Naive thymus-derived CD4-positive, alpha-beta T cell (primary cell): ENCODE measurements at regions of chr18 and their contacts with region 1.

Region 1: GRCh38 chr18:46281185-46282176 is 177.3 kb downstream of the HAUS1 start:
- DNase-seq: peak in 8 of 9 donors; percentile 7 to 60 (median 40)
- ATAC-seq: peak; percentile 85
- H3K4me3 ChIP-seq: no peak overlapping the region
- H3K4me3 Mint-ChIP-seq: no peak overlapping the region
- H3K27ac ChIP-seq: no peak overlapping the region
- H3K27ac Mint-ChIP-seq: no peak overlapping the region
- H3K4me1 ChIP-seq: no peaks in the 10 kb centered on the region
- H3K4me1 Mint-ChIP-seq: peaks cover 6 to 16% (median 14%) of the 10 kb centered on the region in 7 donors
- H3K27me3 ChIP-seq: no peaks in the 10 kb centered on the region
- H3K27me3 Mint-ChIP-seq: no peaks in the 10 kb centered on the region

Region 2: DNA sequence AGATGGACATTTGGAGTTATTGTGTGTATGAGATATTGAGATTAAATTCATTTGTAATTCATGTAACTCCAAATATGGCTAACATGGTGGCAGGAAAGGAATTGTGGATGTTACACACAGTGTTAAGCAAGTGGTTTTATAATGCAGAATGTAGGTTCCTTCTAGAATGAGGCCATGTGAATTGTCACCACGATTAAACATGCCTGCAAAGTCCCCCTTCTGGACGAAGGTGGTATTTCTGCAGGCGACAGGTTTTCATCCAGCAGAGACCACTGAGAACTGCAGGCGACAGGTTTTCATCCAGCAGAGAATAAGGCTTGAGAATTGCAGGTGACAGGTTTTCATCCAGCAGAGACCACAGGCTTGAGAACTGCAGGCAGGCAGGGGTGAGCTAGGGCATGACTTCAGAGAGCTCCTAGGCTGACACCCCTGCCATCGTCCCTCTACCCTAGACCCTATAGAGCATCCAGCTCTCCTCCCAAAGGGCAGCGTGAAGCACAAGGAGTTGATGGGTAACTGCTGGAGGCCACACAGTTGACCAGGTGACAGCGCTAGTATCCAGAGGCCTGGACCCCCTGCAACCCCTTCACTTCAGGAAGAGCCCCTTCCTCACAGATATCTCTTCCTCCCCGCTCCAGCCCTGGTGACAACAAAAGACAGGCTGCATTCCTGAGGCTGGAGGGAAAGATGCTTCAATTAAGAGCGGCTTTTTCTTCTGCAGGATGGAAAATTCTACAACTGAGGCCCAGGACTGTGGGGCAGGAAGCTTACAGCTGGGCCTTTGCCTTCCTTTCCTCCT is 199.8 kb after region 1 on chr18:
- CTCF ChIA-PET with region 1: no interaction called
- POLR2A ChIA-PET with region 1: no interaction called
- intact Hi-C with region 1: loop called (anchors 1 kb)
- DNase-seq: peak in 6 of 9 donors; percentile 31 to 60 (median 40)
- ATAC-seq: peak; percentile 67
- H3K4me3 ChIP-seq: no peak overlapping the region
- H3K4me3 Mint-ChIP-seq: no peak overlapping the region
- H3K27ac ChIP-seq: no peak overlapping the region
- H3K27ac Mint-ChIP-seq: no peak overlapping the region
- H3K4me1 ChIP-seq: no peaks in the 10 kb centered on the region
- H3K4me1 Mint-ChIP-seq: no peaks in the 10 kb centered on the region
- H3K27me3 ChIP-seq: no peaks in the 10 kb centered on the region
- H3K27me3 Mint-ChIP-seq: peaks cover 0 to 22% (median 10%) of the 10 kb centered on the region in 5 donors

Region 3: GRCh38 chr18:46502444-46502843 is 221.0 kb after region 1 on chr18:
- CTCF ChIA-PET with region 1: no interaction called
- POLR2A ChIA-PET with region 1: no interaction called
- intact Hi-C with region 1: no loop called
- DNase-seq: no peak
- ATAC-seq: no peak
- H3K4me3 ChIP-seq: no peak overlapping the region
- H3K4me3 Mint-ChIP-seq: no peak overlapping the region
- H3K27ac ChIP-seq: no peak overlapping the region
- H3K27ac Mint-ChIP-seq: no peak overlapping the region
- H3K4me1 ChIP-seq: no peaks in the 10 kb centered on the region
- H3K4me1 Mint-ChIP-seq: peaks cover 0 to 2% (median 0%) of the 10 kb centered on the region in 7 donors
- H3K27me3 ChIP-seq: no peaks in the 10 kb centered on the region
- H3K27me3 Mint-ChIP-seq: peaks cover 0 to 23% (median 16%) of the 10 kb centered on the region in 5 donors